ENCODE measurements at regions of chr21 and their contacts with region 1.

Region 1: DNA sequence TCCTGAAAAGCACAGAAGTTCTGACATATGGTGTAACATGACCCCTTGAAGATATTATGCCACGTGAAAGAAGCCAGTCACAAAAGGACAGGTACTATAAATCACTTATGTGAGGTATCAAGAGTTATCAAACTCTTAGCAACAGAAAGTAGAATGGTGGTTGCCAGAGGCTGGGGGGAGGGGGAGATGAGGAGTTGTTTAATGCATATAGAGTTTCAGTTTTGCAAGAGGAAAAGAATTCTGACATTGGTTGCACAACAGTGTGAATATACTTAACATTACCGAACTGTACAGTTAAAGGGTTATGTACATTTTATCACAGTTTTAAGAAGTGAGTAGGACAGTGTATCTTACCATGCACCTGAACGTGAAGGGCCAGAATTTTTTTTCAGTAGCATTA is 80.0 kb downstream of the USP25 start:
- DNase-seq: no peak
- ATAC-seq: no peak
- H3K4me3 ChIP-seq: no peak overlapping the region
- H3K4me3 Mint-ChIP-seq: no peak overlapping the region
- H3K27ac ChIP-seq: no peak overlapping the region
- H3K27ac Mint-ChIP-seq: peak overlapping the region in 1 of 2 donors; percentile 50
- H3K4me1 ChIP-seq: no peaks in the 10 kb centered on the region
- H3K4me1 Mint-ChIP-seq: peaks cover 1 to 11% (median 7%) of the 10 kb centered on the region in 3 donors
- H3K27me3 ChIP-seq: no peaks in the 10 kb centered on the region
- H3K27me3 Mint-ChIP-seq: no peaks in the 10 kb centered on the region

Region 2: DNA sequence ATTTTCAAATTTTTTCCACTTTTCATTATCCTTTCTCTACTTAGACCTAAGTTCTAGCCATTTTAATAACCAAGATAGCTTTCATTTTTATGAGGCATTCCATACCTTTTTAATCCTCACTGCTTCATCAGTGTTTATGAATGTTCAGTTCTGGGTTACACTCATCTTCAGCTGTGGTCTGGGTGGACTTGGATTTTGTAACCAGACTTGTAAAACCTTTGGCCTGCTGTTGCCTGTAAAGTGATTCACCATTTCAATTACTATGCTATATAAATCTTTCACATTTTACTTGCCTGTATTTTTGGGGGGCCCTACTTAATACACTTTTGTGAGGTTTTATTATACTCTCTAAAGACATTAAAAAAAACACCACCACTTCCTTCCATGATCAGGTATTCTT is 33.8 kb before region 1 on chr21:
- CTCF ChIA-PET with region 1: no interaction called
- POLR2A ChIA-PET with region 1: interaction called in 1 of 2 experiments, 14 read pairs
- DNase-seq: no peak
- ATAC-seq: no peak
- H3K4me3 ChIP-seq: no peak overlapping the region
- H3K4me3 Mint-ChIP-seq: no peak overlapping the region
- H3K27ac ChIP-seq: no peak overlapping the region
- H3K27ac Mint-ChIP-seq: no peak overlapping the region
- H3K4me1 ChIP-seq: no peaks in the 10 kb centered on the region
- H3K4me1 Mint-ChIP-seq: peaks cover 44 to 61% (median 53%) of the 10 kb centered on the region in 3 donors
- H3K27me3 ChIP-seq: no peaks in the 10 kb centered on the region
- H3K27me3 Mint-ChIP-seq: no peaks in the 10 kb centered on the region

Region 3: GRCh38 chr21:15823486-15824150 is 13.8 kb after region 1 on chr21:
- CTCF ChIA-PET with region 1: interaction called, 4 read pairs
- POLR2A ChIA-PET with region 1: interaction called in 1 of 2 experiments, 11 read pairs
- DNase-seq: peak in 21 of 35 experiments; percentile 1 to 58 (median 20)
- ATAC-seq: peak; percentile 80 to 93 (median 90)
- H3K4me3 ChIP-seq: no peak overlapping the region
- H3K4me3 Mint-ChIP-seq: peak overlapping the region; percentile 54 to 72 (median 69)
- H3K27ac ChIP-seq: peak overlapping the region; percentile 48
- H3K27ac Mint-ChIP-seq: peak overlapping the region; percentile 93 to 96
- H3K4me1 ChIP-seq: peaks cover 5 to 25% of the 10 kb centered on the region in 2 experiments
- H3K4me1 Mint-ChIP-seq: peaks cover 49 to 53% (median 52%) of the 10 kb centered on the region in 3 donors
- H3K27me3 ChIP-seq: no peaks in the 10 kb centered on the region
- H3K27me3 Mint-ChIP-seq: no peaks in the 10 kb centered on the region

Region 4: GRCh38 chr21:15850645-15851044 is 40.8 kb after region 1 on chr21:
- CTCF ChIA-PET with region 1: no interaction called
- POLR2A ChIA-PET with region 1: no interaction called
- DNase-seq: no peak
- ATAC-seq: no peak
- H3K4me3 ChIP-seq: no peak overlapping the region
- H3K4me3 Mint-ChIP-seq: no peak overlapping the region
- H3K27ac ChIP-seq: no peak overlapping the region
- H3K27ac Mint-ChIP-seq: no peak overlapping the region
- H3K4me1 ChIP-seq: no peaks in the 10 kb centered on the region
- H3K4me1 Mint-ChIP-seq: peaks cover 3 to 6% (median 5%) of the 10 kb centered on the region in 3 donors
- H3K27me3 ChIP-seq: no peaks in the 10 kb centered on the region
- H3K27me3 Mint-ChIP-seq: no peaks in the 10 kb centered on the region